HepG2 (cell line): ENCODE measurements at regions of chr10 and their contacts with region 1.

Region 1: DNA sequence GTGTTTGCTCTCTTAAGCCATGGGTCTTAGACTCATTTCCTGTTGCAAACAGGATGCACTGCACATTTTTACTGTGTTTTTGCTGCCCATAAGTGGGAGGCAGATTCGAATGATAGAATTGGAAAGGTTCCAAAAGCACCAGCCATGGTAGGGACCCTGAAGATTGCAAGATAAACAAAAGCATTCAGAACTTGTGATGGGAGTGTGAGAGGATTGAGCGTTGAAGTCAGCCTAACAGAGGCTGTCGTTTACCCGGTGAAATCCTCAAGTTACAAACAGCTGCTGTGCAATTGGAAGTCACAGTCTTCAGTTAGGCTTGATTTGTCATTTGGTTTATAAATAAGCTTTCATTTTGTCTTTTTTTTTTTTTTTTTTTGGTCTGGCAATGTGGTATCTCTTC is 192.7 kb upstream of the MKI67 start:
- DNase-seq: no peak
- ATAC-seq: no peak
- H3K4me3 ChIP-seq: no peak overlapping the region
- H3K27ac ChIP-seq: no peak overlapping the region
- H3K4me1 ChIP-seq: no peaks in the 10 kb centered on the region
- H3K27me3 ChIP-seq: no peaks in the 10 kb centered on the region; a peak in 1 of 5 replicates
- CTCF ChIP-seq: no peak
- EP300 ChIP-seq: no peak
- POLR2A ChIP-seq: no peak
- RAD21 ChIP-seq: no peak

Region 2: GRCh38 chr10:130074639-130075038 is 1755.7 kb after region 1 on chr10:
- CTCF ChIA-PET with region 1: no interaction called
- POLR2A ChIA-PET with region 1: no interaction called
- in situ Hi-C with region 1: no loop called
- intact Hi-C with region 1: loop called (anchors 5 kb)
- DNase-seq: no peak
- ATAC-seq: no peak
- H3K4me3 ChIP-seq: no peak overlapping the region
- H3K27ac ChIP-seq: no peak overlapping the region
- H3K4me1 ChIP-seq: no peaks in the 10 kb centered on the region
- H3K27me3 ChIP-seq: peaks cover 0 to 1% of the 10 kb centered on the region in 2 experiments; a peak in 1 of 5 replicates
- CTCF ChIP-seq: no peak
- EP300 ChIP-seq: no peak
- POLR2A ChIP-seq: no peak
- RAD21 ChIP-seq: no peak